Prostate gland (tissue), 2 donors: ENCODE measurements at regions of chr10 and their contacts with region 1.

Region 1: DNA sequence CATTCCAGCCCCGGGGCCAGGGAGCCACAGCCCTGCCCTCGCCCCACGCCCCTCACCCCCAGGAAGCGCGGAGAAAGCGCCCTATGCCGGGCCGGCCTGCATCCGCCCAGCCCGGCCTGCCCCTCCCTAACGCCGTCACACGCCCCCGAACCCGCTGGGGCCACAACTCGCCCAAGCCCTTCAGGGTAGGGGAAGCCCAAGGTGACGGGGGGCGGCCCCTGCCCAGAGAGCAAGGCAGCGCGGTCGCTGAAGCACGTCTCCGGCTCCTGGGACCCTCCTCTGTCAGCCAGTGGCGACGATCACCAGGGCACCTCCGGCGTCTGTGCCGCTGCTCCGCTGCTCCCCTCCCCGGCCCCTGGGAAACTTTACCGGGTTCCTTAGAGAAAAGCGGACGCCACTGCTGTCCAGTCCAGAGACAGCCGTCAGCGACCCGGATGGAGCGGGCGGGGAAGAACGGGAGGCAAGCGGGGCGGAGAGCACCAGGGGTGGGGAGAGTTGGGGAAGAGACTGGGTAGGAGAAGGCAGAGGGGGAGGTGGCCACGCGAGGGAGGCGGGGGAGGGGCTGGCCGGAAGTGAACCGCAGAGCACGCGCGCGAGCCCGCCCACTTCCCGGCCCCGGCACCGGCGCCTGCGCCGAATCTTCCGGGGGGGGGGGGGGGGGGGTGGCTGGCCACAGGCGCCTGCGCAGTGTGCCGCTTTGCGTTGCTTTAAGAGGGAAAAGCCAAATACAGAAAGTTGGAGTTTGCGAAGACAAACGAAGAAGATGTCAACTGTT is at the start of gene HERC4:
- DNase-seq: peak; percentile 93
- H3K4me3 ChIP-seq: peak within 1 kb of the TSS; percentile 68 to 96
- H3K27ac ChIP-seq: peak within 1 kb of the TSS; percentile 96 to 97
- H3K4me1 ChIP-seq: no peaks in the 10 kb centered on the region
- H3K27me3 ChIP-seq: no peaks in the 10 kb centered on the region
- CTCF ChIP-seq: peak in 1 of 4 experiments; percentile 0
- POLR2A ChIP-seq: peak; percentile 73
- total RNA-seq, gene HERC4: 27.7 to 40.6 TPM

Region 2: DNA sequence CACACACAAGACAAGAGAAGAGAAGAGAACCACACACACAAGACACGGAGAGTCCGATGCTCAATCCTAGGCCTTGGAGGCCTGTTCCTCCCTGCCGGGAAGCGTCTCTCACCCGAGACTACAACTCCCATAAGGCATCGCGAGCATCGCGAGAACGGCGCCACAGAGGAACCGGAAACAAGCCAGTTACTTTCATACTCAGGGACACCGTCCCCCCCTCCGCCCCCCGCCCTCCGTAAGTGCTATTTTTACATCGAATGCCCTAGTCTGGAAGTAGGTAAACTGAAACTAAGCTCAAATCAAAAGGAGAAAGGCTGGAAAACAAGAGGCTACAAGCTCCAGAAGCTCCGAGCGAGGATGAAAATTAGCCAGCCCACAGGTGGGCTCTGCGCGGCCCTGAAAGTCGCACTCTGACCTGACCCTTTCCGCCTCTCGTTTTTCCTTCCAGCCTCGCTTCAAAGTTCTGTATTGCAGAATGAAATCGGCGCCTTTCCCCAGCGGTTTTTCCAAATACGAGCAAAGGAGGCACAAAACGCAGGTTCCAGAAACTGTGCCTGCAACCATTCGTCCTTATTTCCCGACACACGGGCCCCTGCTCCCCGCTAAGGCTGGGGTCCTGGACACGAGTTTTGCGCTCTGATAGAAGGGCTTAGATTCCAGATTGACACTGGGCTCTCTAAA is 225.5 kb before region 1 on chr10:
- intact Hi-C with region 1: loop called (anchors 10 kb)
- DNase-seq: peak; percentile 91
- H3K4me3 ChIP-seq: peak overlapping the region; percentile 39 to 66
- H3K27ac ChIP-seq: peak overlapping the region; percentile 81 to 89
- H3K4me1 ChIP-seq: no peaks in the 10 kb centered on the region
- H3K27me3 ChIP-seq: no peaks in the 10 kb centered on the region
- CTCF ChIP-seq: peak in 1 of 4 experiments; percentile 24
- POLR2A ChIP-seq: peak; percentile 61

Region 3: GRCh38 chr10:67884313-67884841 is 190.6 kb before region 1 on chr10 and contains the start of gene SIRT1:
- intact Hi-C with region 1: loop called (anchors 10 kb)
- DNase-seq: peak; percentile 97
- H3K4me3 ChIP-seq: peak within 1 kb of the TSS; percentile 60 to 91
- H3K27ac ChIP-seq: peak within 1 kb of the TSS; percentile 92 to 97
- H3K4me1 ChIP-seq: peaks cover 2% of the 10 kb centered on the region
- H3K27me3 ChIP-seq: no peaks in the 10 kb centered on the region
- CTCF ChIP-seq: no peak
- POLR2A ChIP-seq: peak; percentile 92
- total RNA-seq, gene SIRT1: 22.0 to 46.2 TPM

Region 4: GRCh38 chr10:68023292-68023691 is 51.7 kb before region 1 on chr10:
- intact Hi-C with region 1: no loop called
- DNase-seq: no peak
- H3K4me3 ChIP-seq: no peak overlapping the region
- H3K27ac ChIP-seq: no peak overlapping the region
- H3K4me1 ChIP-seq: no peaks in the 10 kb centered on the region
- H3K27me3 ChIP-seq: no peaks in the 10 kb centered on the region
- CTCF ChIP-seq: no peak
- POLR2A ChIP-seq: no peak

Region 5: GRCh38 chr10:68331455-68332258 is 256.7 kb after region 1 on chr10 and contains the start of gene HNRNPH3:
- intact Hi-C with region 1: loop called (anchors 10 kb)
- DNase-seq: peak; percentile 98
- H3K4me3 ChIP-seq: peak within 1 kb of the TSS; percentile 66 to 90
- H3K27ac ChIP-seq: peak within 1 kb of the TSS; percentile 94 to 98
- H3K4me1 ChIP-seq: peaks cover 9% of the 10 kb centered on the region
- H3K27me3 ChIP-seq: no peaks in the 10 kb centered on the region
- CTCF ChIP-seq: peak in 1 of 4 experiments; percentile 20
- POLR2A ChIP-seq: peak; percentile 100
- total RNA-seq, gene HNRNPH3: 29.1 to 47.5 TPM